Heart left ventricle (tissue), 16 donors: ENCODE measurements at regions of chr3 and their contacts with region 1.

Region 1: DNA sequence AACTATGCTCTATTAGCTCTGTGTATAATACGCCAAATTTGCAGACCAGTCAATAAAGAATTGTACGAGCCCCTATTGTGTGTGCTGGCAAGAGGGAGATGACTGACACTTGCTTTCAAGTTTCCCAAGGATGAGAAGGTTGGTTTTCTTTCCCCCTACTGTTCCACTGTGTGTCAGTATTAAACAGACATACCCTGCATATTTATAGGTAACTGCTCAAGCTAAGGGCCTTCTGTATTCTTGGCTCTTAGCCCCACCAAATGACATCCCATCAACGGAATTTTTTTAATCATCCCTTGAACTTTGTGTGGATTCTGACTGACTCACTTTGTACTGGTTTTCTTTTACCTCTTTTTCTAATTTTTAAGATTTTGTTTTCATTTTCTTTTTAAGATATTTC is 60.6 kb upstream of the GYG1 start:
- DNase-seq: no peak
- ATAC-seq: no peak
- H3K4me3 ChIP-seq: no peak overlapping the region
- H3K27ac ChIP-seq: no peak overlapping the region
- H3K4me1 ChIP-seq: no peaks in the 10 kb centered on the region
- H3K27me3 ChIP-seq: no peaks in the 10 kb centered on the region
- CTCF ChIP-seq: no peak
- POLR2A ChIP-seq: no peak

Region 2: DNA sequence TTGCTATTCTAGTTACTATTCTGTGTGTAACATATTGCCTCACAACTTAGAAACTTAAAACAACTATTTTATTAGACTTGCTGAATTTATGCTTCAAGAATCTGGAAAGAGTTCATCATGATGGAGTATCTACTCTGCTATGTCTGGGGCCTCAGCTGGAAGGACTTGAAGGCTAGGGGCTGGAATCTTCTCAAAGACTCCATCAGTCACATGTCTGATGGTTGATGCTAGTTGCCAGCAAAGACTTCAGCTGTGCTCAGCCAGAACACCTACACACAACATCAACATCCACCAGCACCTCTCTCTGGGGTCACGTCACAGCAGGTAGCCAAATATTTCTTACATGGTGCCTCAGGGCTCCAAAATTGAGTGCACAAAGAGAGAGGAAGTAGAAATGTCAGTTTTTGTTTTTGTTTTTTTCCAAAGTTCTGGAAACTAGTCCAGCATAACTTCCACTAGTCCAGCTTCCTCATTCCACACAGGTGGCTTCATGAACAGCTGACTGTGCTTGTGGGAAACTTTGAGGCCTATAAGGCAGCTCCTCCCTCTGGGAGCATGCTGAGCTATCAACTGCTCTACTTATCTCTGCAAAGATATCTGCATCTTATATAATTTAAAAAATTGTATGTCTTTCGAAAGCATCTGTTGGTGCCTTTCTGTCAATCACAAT is 558.4 kb before region 1 on chr3:
- intact Hi-C with region 1: loop called in 1 of 10 experiments (anchors 5 kb)
- DNase-seq: no peak
- ATAC-seq: no peak
- H3K4me3 ChIP-seq: no peak overlapping the region
- H3K27ac ChIP-seq: no peak overlapping the region
- H3K4me1 ChIP-seq: no peaks in the 10 kb centered on the region
- H3K27me3 ChIP-seq: no peaks in the 10 kb centered on the region
- CTCF ChIP-seq: no peak
- POLR2A ChIP-seq: no peak

Region 3: DNA sequence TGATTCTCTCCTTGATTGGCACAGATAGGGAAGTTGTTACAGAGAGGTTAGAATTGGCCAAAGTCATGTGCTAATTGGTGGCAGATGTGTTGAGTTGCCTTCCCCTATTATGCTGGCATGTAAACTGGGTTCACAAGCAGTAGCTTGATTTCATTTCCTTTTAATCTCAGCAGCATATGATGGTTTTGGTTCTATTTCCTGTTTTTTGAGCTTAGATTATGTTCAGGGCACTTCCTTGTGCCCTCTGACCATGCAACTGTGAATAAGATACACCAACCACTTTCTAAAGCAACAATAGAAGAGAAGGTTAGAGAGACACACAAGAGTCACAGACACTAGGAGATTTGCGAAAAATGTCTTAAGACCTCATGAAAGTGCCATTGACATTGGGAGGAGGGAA is 215.2 kb after region 1 on chr3:
- intact Hi-C with region 1: no loop called
- DNase-seq: no peak
- ATAC-seq: peak; percentile 47 to 77 (median 62)
- H3K4me3 ChIP-seq: no peak overlapping the region
- H3K27ac ChIP-seq: peak overlapping the region in 1 of 12 donors; percentile 88
- H3K4me1 ChIP-seq: peaks cover 0 to 34% (median 0%) of the 10 kb centered on the region in 12 donors
- H3K27me3 ChIP-seq: no peaks in the 10 kb centered on the region
- CTCF ChIP-seq: no peak
- POLR2A ChIP-seq: no peak